Activated naive CD4-positive, alpha-beta T cell treated with anti-CD3 and anti-CD28 coated beads for 36 hours (primary cell): ENCODE measurements at regions of chr5 and their contacts with region 1.

Region 1: DNA sequence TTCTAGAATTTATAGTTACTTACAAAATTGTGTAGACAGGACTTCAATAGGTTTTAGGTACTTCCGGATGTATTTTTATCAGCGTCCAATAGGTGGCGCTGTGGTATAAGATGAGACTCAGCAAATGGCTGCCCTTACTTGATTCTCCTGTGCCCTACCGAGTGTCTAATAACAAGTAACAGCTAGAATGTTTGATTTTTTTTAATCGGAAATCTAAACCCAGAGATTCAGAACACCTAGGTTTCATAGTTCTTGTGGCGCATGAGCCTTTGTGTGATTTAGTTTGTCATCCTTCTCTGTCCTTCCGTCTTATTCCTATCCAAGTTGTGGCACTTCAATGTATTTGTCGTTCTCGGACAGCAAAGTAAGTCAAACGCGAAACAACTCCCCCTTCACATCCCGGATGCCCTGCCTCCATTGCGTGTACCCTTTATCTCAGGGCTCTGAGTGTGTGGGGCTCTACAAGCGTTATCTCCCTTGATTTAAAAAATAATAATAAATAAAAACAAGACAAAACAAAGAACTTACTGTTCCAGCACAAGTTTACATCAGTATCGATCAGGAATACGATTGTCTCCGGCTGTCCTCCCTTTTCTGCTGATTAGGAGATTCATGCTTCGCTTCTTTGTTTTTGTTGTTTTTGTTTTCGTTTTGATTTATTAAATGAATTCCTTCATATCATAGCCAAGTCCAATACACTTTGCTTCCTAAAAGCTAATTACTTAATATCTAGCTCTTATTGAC is 50.7 kb upstream of the SLC30A5 start:
- DNase-seq: peak; percentile 90
- H3K4me3 Mint-ChIP-seq: peak overlapping the region; percentile 73
- H3K27ac Mint-ChIP-seq: peak overlapping the region; percentile 84
- H3K4me1 Mint-ChIP-seq: peaks cover 9% of the 10 kb centered on the region
- H3K27me3 Mint-ChIP-seq: no peaks in the 10 kb centered on the region

Region 2: GRCh38 chr5:69083412-69083811 is 40.3 kb after region 1 on chr5:
- CTCF ChIA-PET with region 1: interaction called, 10 read pairs
- intact Hi-C with region 1: loop called (anchors 1 kb)
- DNase-seq: peak; percentile 17
- H3K4me3 Mint-ChIP-seq: no peak overlapping the region
- H3K27ac Mint-ChIP-seq: peak overlapping the region; percentile 4
- H3K4me1 Mint-ChIP-seq: peaks cover 12% of the 10 kb centered on the region
- H3K27me3 Mint-ChIP-seq: no peaks in the 10 kb centered on the region

Region 3: GRCh38 chr5:69189162-69190086 is 146.3 kb after region 1 on chr5 and contains the start of gene CENPH:
- CTCF ChIA-PET with region 1: no interaction called
- intact Hi-C with region 1: loop called (anchors 1 kb)
- DNase-seq: peak; percentile 96
- H3K4me3 Mint-ChIP-seq: peak within 1 kb of the TSS; percentile 84
- H3K27ac Mint-ChIP-seq: peak within 1 kb of the TSS; percentile 90
- H3K4me1 Mint-ChIP-seq: peaks cover 13% of the 10 kb centered on the region
- H3K27me3 Mint-ChIP-seq: no peaks in the 10 kb centered on the region
- total RNA-seq, gene CENPH: 93.0 to 95.2 TPM

Region 4: GRCh38 chr5:69334793-69335268 is 291.7 kb after region 1 on chr5:
- CTCF ChIA-PET with region 1: interaction called, 8 read pairs
- intact Hi-C with region 1: loop called (anchors 1 kb)
- DNase-seq: peak; percentile 88
- H3K4me3 Mint-ChIP-seq: peak overlapping the region; percentile 24
- H3K27ac Mint-ChIP-seq: no peak overlapping the region
- H3K4me1 Mint-ChIP-seq: peaks cover 13% of the 10 kb centered on the region
- H3K27me3 Mint-ChIP-seq: no peaks in the 10 kb centered on the region

Region 5: DNA sequence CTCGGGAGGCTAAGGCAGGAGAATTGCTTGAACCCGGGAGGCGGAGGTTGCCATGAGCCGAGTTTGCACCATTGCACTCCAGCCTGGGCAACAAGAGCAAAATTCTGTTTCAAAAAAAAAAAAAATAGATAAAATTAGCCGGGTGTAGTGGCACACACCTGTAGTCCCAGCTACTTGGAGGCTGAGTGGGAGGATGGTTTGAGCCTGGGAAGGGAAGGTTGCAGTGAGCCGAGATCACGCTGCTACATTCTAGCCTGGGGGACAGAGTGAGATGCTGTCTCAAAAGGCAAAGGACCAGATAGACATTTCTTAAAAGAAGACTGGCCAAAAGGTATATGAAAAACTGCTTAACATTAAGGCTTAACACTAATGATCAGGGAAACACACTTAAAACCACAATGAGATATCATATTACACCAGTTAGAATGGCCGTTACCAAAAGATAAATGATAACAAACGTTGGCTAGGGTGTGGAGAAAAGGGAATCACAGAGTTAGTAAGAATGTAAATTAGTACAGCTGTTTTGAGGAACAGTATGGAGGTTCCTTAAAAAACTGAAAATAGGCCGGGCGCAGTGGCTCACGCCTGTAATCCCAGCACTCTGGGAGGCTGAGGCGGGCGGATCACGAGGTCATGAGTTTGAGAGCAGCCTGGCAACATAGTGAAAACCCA is 361.7 kb after region 1 on chr5:
- CTCF ChIA-PET with region 1: no interaction called
- intact Hi-C with region 1: no loop called
- DNase-seq: no peak
- H3K4me3 Mint-ChIP-seq: no peak overlapping the region
- H3K27ac Mint-ChIP-seq: no peak overlapping the region
- H3K4me1 Mint-ChIP-seq: no peaks in the 10 kb centered on the region
- H3K27me3 Mint-ChIP-seq: no peaks in the 10 kb centered on the region